A549 (cell line): ENCODE measurements at regions of chr9 and their contacts with region 1.

Region 1: GRCh38 chr9:126301985-126302603 is 24.5 kb upstream of the MVB12B start:
- DNase-seq: peak; percentile 64 to 75
- ATAC-seq: peak; percentile 91 to 95
- H3K4me3 ChIP-seq: no peak overlapping the region
- H3K27ac ChIP-seq: no peak overlapping the region
- H3K4me1 ChIP-seq: no peaks in the 10 kb centered on the region
- CTCF ChIP-seq: peak; percentile 69
- EP300 ChIP-seq: no peak
- POLR2A ChIP-seq: no peak
- RAD21 ChIP-seq: peak; percentile 64 to 74

Region 2: GRCh38 chr9:126420643-126421577 is 118.8 kb after region 1 on chr9:
- CTCF ChIA-PET with region 1: interaction called, 10 read pairs
- POLR2A ChIA-PET with region 1: no interaction called
- DNase-seq: peak; percentile 35 to 55
- ATAC-seq: peak; percentile 80 to 81; a peak in 5 of 6 replicates
- H3K4me3 ChIP-seq: no peak overlapping the region
- H3K27ac ChIP-seq: peak overlapping the region; percentile 29 to 70; a peak in 4 of 6 replicates
- H3K4me1 ChIP-seq: peaks cover 31% of the 10 kb centered on the region
- CTCF ChIP-seq: no peak
- EP300 ChIP-seq: no peak
- POLR2A ChIP-seq: no peak
- RAD21 ChIP-seq: no peak

Region 3: DNA sequence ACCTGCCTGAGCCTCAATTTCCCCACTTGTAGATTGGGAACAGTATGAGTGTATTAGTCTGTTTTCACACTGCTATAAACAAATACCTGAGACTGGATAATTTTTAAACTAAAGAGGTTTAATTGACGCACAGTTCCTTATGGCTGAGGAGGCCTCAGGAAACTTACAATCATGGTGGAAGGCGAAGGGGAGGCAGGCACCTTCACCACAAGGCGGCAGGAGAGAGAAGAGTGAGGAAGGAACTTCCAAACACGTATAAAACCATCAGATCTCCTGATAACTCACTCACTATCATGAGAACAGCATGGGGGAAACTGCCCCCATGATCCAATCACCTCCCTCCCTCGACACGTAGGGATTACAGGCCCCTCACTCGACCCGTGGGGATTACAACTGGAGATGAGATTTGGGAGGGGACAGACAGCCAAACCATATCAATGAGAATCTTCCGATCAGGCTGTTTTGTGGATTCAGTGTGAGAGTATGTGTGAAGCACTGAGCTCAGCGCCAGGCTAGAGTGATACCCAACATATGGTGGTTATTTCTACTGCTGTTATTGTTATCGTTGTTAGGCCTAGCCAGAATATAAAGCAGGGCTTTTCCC is 297.1 kb after region 1 on chr9:
- CTCF ChIA-PET with region 1: no interaction called
- POLR2A ChIA-PET with region 1: no interaction called
- DNase-seq: no peak
- ATAC-seq: peak in 1 of 2 experiments; percentile 60; a peak in 2 of 6 replicates
- H3K4me3 ChIP-seq: no peak overlapping the region
- H3K27ac ChIP-seq: no peak overlapping the region
- H3K4me1 ChIP-seq: no peaks in the 10 kb centered on the region
- CTCF ChIP-seq: peak; percentile 16; the same call in 1 of the 3 replicates
- EP300 ChIP-seq: no peak
- POLR2A ChIP-seq: no peak
- RAD21 ChIP-seq: no peak